Caki2 (cell line): ENCODE measurements at regions of chr12 and their contacts with region 1.

Region 1: DNA sequence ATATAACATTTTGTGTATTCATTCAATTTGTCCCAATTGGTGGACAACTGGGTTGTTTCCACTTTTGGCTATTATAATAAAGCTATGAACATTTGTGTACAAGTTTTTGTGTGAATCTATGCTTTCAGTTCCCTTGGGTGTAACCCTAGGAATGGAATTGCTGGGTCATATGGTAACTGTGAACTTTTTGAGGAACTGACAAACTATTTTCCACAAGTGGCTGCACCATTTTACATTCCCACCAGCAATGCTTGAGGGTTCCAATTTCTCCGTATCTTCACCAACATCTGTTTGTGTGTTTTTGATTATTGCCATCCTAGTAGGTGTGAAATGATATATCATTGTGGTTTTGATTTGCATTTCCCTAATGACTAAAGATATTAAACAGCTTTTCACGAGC is 13.0 kb downstream of the LPCAT3 start:
- DNase-seq: no peak

Region 2: DNA sequence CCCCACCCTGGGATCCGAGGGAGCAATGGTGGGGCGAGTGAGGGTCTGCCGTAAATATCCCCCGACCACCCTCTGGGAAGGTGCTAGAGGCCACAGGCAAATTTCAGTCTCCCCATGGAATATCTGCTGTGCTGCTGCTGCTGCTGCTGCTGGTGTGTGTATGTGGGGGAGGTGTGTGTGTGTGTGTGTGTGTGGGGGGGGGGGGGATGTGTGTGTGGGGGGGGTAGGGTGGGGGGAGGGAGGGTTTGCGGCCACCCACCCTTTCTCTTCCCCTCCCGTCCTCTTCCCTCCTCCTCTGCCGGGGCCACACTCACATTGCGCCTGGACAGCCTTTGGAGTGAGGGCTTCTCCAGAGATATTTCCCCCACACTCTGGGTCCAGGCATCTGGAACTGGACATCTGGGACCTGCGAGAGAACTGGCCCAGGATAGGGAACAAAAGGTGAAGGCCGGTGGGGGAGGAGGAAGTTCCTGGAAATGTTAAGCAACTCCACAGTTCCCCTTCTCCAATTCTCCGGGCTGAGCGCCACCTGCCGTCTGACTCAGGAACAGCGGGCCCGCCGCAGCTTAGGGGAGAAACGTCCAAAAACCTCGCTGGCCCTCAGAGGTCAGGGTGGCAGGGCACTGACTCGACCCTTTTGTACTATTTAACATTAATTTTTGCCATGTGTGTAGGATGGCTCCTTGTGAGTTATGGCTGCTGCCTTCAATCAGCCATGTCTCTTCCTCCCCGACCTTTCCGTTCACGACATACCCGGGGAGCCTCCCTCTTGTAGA is 103.7 kb after region 1 on chr12 and contains the start of gene C1RL:
- in situ Hi-C with region 1: loop called (anchors 10 kb)
- DNase-seq: peak; percentile 79
- total RNA-seq, gene C1RL: 14.8 and 22.4 TPM in 2 replicates

Region 3: DNA sequence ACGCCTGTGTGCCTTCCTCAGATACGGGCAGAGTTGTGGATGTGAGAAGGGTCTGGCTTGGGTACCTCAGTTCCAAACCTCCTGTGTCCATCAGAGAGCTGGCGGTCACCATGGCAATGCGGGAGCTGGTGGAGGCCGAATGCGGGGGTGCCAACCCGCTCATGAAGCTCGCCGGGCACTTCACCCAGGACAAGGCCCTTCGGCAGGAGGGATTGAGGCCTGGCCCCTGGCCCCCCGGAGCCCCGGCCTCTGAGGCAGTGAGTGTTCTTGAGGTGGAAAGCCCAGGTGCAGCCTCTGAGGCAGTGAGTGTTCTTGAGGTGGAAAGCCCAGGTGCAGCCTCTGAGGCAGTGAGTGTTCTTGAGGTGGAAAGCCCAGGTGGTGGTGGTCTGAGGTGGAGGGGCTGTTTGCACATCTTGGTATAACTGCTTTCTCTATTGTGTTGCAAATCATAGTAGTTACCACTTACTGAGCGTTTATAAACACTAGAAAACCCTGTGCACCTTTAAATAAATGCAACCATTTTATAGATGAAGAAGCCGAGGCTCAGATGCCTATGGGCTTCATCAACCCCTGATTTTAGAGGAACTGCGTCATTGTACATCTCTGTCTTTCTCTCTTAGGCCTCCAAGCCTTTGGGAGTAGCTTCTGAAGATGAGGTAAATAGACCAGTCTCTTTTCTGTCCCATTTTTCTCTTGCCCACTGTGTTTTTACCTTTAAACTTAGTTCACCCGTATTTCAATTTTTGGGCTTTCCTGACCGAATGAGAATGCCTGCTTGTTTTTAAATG is 185.2 kb after region 1 on chr12:
- in situ Hi-C with region 1: no loop called
- DNase-seq: no peak